ENCODE measurements at regions of chr6 and their contacts with region 1.

Region 1: DNA sequence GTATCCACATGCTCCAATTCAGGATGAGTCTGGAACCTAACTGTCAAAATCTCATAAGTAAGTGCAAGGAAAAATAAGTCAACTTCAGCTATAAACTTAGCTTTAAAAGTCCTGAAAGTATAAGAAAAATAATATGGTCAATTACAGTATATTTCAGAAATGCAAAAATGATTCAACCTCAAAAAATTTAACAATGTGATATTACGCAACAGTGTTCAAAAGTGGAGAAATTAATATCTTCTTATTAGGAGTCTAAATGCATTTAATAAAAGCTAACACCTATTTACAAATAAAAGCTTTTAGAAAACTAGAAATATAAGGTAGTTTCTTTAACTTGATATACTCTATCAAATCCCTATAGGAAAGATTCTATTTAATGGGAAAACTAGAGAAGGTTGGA is 111.2 kb upstream of the OPRM1 start:
- DNase-seq: no peak
- ATAC-seq: no peak

Region 2: GRCh38 chr6:155656024-155656423 is 1728.2 kb after region 1 on chr6:
- intact Hi-C with region 1: loop called (anchors 5 kb)
- DNase-seq: no peak
- ATAC-seq: no peak

Measured in sciatic nerve (tissue), 2 donors.